ENCODE measurements at regions of chr5 and their contacts with region 1.

Region 1: DNA sequence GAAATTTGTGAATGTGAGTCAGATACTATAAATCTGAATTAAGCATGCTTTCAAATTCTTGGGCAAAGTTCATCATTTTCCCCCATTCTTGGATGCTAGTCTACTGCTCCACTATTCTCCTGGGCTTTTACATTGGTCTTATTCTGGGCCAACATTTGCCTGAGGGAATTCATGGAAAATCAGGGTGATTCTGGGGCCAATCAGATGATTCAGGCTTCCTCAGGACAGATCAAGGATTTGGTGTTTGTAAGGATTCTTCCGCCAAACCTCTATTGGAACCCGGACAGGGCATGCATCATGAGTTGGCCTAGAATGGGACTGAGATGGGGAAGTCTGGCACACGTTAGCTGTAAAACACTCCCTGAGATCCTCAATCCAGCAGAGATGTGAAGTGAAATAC is 113.8 kb downstream of the MEF2C start:
- DNase-seq: no peak
- ATAC-seq: no peak
- H3K4me3 ChIP-seq: no peak overlapping the region
- H3K4me3 Mint-ChIP-seq: no peak overlapping the region
- H3K27ac ChIP-seq: peak overlapping the region in 1 of 2 donors; percentile 44
- H3K27ac Mint-ChIP-seq: peak overlapping the region; percentile 61
- H3K4me1 ChIP-seq: peaks cover 13 to 15% of the 10 kb centered on the region in 2 donors
- H3K4me1 Mint-ChIP-seq: peaks cover 60% of the 10 kb centered on the region
- H3K27me3 ChIP-seq: no peaks in the 10 kb centered on the region
- H3K27me3 Mint-ChIP-seq: no peaks in the 10 kb centered on the region
- CTCF ChIP-seq: no peak

Region 2: DNA sequence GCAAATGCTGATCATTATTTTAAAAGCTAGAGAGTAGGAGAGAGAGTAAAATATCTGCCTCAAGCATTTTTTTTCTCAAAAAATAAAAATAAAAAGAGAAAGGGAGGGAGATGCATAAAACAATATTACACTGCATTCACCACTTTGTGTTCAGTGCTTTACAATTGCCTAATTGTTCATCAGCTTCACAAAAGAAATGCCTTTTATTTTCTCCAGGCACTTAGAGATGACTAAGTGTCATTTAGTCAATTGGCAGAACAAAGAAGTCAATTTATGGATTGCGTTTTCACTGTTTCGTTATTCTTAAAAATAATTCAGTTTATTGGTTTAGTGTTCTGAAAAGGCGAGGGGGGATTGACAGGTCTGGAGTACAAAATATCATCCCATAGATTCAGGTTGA is 1123.9 kb before region 1 on chr5:
- CTCF ChIA-PET with region 1: no interaction called
- POLR2A ChIA-PET with region 1: no interaction called
- intact Hi-C with region 1: no loop called
- DNase-seq: no peak
- ATAC-seq: no peak
- H3K4me3 ChIP-seq: no peak overlapping the region
- H3K4me3 Mint-ChIP-seq: no peak overlapping the region
- H3K27ac ChIP-seq: no peak overlapping the region
- H3K27ac Mint-ChIP-seq: no peak overlapping the region
- H3K4me1 ChIP-seq: no peaks in the 10 kb centered on the region
- H3K4me1 Mint-ChIP-seq: no peaks in the 10 kb centered on the region
- H3K27me3 ChIP-seq: no peaks in the 10 kb centered on the region
- H3K27me3 Mint-ChIP-seq: no peaks in the 10 kb centered on the region
- CTCF ChIP-seq: no peak

Region 3: GRCh38 chr5:88021141-88021540 is 748.0 kb before region 1 on chr5:
- CTCF ChIA-PET with region 1: no interaction called
- POLR2A ChIA-PET with region 1: no interaction called
- intact Hi-C with region 1: no loop called
- DNase-seq: no peak
- ATAC-seq: no peak
- H3K4me3 ChIP-seq: no peak overlapping the region
- H3K4me3 Mint-ChIP-seq: no peak overlapping the region
- H3K27ac ChIP-seq: no peak overlapping the region
- H3K27ac Mint-ChIP-seq: no peak overlapping the region
- H3K4me1 ChIP-seq: no peaks in the 10 kb centered on the region
- H3K4me1 Mint-ChIP-seq: no peaks in the 10 kb centered on the region
- H3K27me3 ChIP-seq: no peaks in the 10 kb centered on the region
- H3K27me3 Mint-ChIP-seq: peaks cover 3% of the 10 kb centered on the region
- CTCF ChIP-seq: no peak

Region 4: DNA sequence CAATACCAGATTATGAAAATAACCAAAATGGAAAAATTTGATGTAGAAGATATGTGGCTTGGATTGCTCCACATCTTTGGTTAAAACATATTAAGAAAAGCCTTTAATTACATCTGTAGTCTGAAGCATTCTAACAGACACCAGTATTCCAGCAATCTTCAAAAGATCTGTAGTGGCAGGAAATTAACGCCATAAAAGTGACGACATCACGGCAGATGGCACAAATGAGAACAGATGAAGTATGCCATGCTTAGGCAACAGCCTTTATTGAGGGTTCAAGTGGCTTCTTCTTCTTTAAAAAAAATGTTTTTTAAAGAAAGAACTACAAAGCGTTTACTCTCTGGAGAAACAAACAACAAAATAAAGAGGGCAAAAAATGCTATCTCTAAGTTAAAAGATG is 50.4 kb before region 1 on chr5:
- CTCF ChIA-PET with region 1: no interaction called
- POLR2A ChIA-PET with region 1: no interaction called
- intact Hi-C with region 1: no loop called
- DNase-seq: no peak
- ATAC-seq: no peak
- H3K4me3 ChIP-seq: no peak overlapping the region
- H3K4me3 Mint-ChIP-seq: no peak overlapping the region
- H3K27ac ChIP-seq: no peak overlapping the region
- H3K27ac Mint-ChIP-seq: no peak overlapping the region
- H3K4me1 ChIP-seq: no peaks in the 10 kb centered on the region
- H3K4me1 Mint-ChIP-seq: no peaks in the 10 kb centered on the region
- H3K27me3 ChIP-seq: no peaks in the 10 kb centered on the region
- H3K27me3 Mint-ChIP-seq: no peaks in the 10 kb centered on the region
- CTCF ChIP-seq: no peak

Region 5: GRCh38 chr5:88756953-88757352 is 12.2 kb before region 1 on chr5:
- CTCF ChIA-PET with region 1: no interaction called
- POLR2A ChIA-PET with region 1: no interaction called
- intact Hi-C with region 1: loop called (anchors 2 kb)
- DNase-seq: no peak
- ATAC-seq: no peak
- H3K4me3 ChIP-seq: no peak overlapping the region
- H3K4me3 Mint-ChIP-seq: no peak overlapping the region
- H3K27ac ChIP-seq: peak overlapping the region in 1 of 2 donors; percentile 56
- H3K27ac Mint-ChIP-seq: peak overlapping the region; percentile 78
- H3K4me1 ChIP-seq: no peaks in the 10 kb centered on the region
- H3K4me1 Mint-ChIP-seq: peaks cover 32% of the 10 kb centered on the region
- H3K27me3 ChIP-seq: no peaks in the 10 kb centered on the region
- H3K27me3 Mint-ChIP-seq: no peaks in the 10 kb centered on the region
- CTCF ChIP-seq: no peak